GM23248 (cell line): ENCODE measurements at regions of chr19 and their contacts with region 1.

Region 1: DNA sequence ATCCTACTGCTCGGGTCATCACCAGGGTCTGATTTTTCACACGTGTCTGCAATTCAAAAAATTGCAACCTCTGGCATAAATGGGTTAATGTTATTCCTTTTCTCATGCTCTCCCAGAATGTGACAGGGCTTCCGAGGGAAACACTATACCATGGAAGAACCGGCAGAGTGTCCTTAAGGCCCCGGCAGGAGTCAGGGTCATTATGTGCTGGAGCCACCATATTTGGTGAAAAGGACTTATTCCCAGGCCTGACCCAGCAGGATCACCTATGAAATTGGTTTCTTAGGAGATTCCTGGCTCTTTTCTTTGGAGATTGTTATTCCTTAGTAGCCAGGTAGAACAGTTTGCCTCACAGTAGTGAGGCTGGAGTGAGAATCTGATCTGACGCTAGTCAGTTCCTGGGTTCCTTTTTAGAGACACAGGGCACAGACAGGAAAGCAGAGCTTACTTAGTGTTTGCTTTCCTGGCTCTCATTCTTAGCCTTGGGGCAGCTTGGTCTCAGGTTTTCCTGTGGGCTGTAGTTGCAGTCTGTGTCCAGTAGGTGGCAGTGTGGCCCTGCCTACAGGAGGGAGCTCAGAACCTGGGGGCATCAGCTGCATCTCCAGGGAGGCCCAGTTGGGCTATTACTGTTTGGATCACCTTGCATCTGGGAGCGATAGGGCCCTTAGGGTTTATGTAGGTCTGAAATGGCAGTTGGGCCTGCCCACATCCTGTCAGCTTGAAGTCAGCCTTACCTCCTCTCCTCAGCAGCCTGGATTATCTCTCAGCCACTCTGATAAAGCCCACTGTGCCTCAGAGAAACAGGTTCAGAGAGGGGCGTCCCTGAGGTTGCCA is 12.4 kb downstream of the SNRNP70 start:
- DNase-seq: peak; percentile 79
- H3K4me3 ChIP-seq: no peak overlapping the region
- H3K27ac ChIP-seq: no peak overlapping the region
- H3K4me1 ChIP-seq: no peaks in the 10 kb centered on the region
- H3K27me3 ChIP-seq: no peaks in the 10 kb centered on the region

Region 2: GRCh38 chr19:48933382-48933932 is 164.2 kb before region 1 on chr19 and contains the start of gene DHDH:
- in situ Hi-C with region 1: no loop called
- DNase-seq: peak; percentile 71
- H3K4me3 ChIP-seq: peak within 1 kb of the TSS; percentile 77
- H3K27ac ChIP-seq: no peak within 1 kb of the TSS
- H3K4me1 ChIP-seq: 0 out of 2 replicates have a peak, but pooled peaks cover 8% of the 10 kb centered on the region
- H3K27me3 ChIP-seq: peaks cover 5% of the 10 kb centered on the region; the same call in 1 of the 2 replicates
- total RNA-seq, gene DHDH: not detected in 2 replicates

Region 3: GRCh38 chr19:49200238-49200862 is 102.7 kb after region 1 on chr19:
- in situ Hi-C with region 1: loop called (anchors 10 kb)
- DNase-seq: peak; percentile 61
- H3K4me3 ChIP-seq: no peak overlapping the region
- H3K27ac ChIP-seq: no peak overlapping the region
- H3K4me1 ChIP-seq: peaks cover 13% of the 10 kb centered on the region
- H3K27me3 ChIP-seq: no peaks in the 10 kb centered on the region